ENCODE measurements at regions of chr1 and their contacts with region 1.

Region 1: GRCh38 chr1:181936768-181937581 is 124.5 kb downstream of the ZNF648 start:
- DNase-seq: peak; percentile 80
- ATAC-seq: peak; percentile 99
- H3K4me3 Mint-ChIP-seq: peak overlapping the region; percentile 37; the same call in 1 of the 2 replicates
- H3K27ac Mint-ChIP-seq: no peak overlapping the region
- H3K4me1 Mint-ChIP-seq: no peaks in the 10 kb centered on the region
- H3K27me3 Mint-ChIP-seq: no peaks in the 10 kb centered on the region
- CTCF ChIP-seq: peak; percentile 72; the same call in 1 of the 2 replicates

Region 2: GRCh38 chr1:181479137-181479745 is 457.7 kb before region 1 on chr1:
- CTCF ChIA-PET with region 1: interaction called, 62 read pairs
- POLR2A ChIA-PET with region 1: no interaction called
- DNase-seq: peak; percentile 56
- ATAC-seq: peak; percentile 66
- H3K4me3 Mint-ChIP-seq: no peak overlapping the region
- H3K27ac Mint-ChIP-seq: no peak overlapping the region
- H3K4me1 Mint-ChIP-seq: peaks cover 21% of the 10 kb centered on the region
- H3K27me3 Mint-ChIP-seq: peaks cover 47% of the 10 kb centered on the region
- CTCF ChIP-seq: peak; percentile 55

Region 3: GRCh38 chr1:181737056-181737455 is 199.9 kb before region 1 on chr1:
- CTCF ChIA-PET with region 1: interaction called, 12 read pairs
- POLR2A ChIA-PET with region 1: no interaction called
- DNase-seq: peak; percentile 22
- ATAC-seq: peak; percentile 86
- H3K4me3 Mint-ChIP-seq: no peak overlapping the region
- H3K27ac Mint-ChIP-seq: no peak overlapping the region
- H3K4me1 Mint-ChIP-seq: no peaks in the 10 kb centered on the region
- H3K27me3 Mint-ChIP-seq: no peaks in the 10 kb centered on the region
- CTCF ChIP-seq: no peak

Region 4: DNA sequence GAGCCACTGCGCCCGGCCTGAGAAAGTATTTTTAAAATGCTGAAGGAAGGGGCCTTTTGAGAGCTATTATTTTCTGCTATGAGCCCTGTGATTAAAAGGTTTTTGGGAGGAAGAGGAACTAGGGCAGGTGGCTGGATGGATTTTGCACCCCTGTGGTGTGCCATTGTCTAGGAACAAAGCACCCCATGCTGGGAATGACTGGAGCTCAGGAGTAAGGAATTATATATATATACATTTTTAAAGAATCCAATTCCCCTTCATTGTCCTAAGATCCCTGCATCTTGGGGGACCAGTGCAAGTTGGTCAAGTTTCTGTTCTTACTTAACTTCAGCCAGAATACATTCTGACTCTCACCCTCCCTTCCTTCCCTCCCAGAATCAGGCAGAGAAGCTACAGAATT is 32.9 kb after region 1 on chr1:
- CTCF ChIA-PET with region 1: interaction called, 15 read pairs
- POLR2A ChIA-PET with region 1: no interaction called
- DNase-seq: peak; percentile 86
- ATAC-seq: peak; percentile 91
- H3K4me3 Mint-ChIP-seq: no peak overlapping the region
- H3K27ac Mint-ChIP-seq: peak overlapping the region; percentile 89
- H3K4me1 Mint-ChIP-seq: peaks cover 44% of the 10 kb centered on the region
- H3K27me3 Mint-ChIP-seq: no peaks in the 10 kb centered on the region
- CTCF ChIP-seq: no peak

Region 5: GRCh38 chr1:182054698-182055326 is 117.8 kb after region 1 on chr1:
- CTCF ChIA-PET with region 1: interaction called, 38 read pairs
- POLR2A ChIA-PET with region 1: no interaction called
- DNase-seq: peak; percentile 69
- ATAC-seq: peak; percentile 83
- H3K4me3 Mint-ChIP-seq: no peak overlapping the region
- H3K27ac Mint-ChIP-seq: no peak overlapping the region
- H3K4me1 Mint-ChIP-seq: no peaks in the 10 kb centered on the region
- H3K27me3 Mint-ChIP-seq: peaks cover 26% of the 10 kb centered on the region
- CTCF ChIP-seq: peak; percentile 50

Measured in WTC11 (cell line).